H1 (cell line): ENCODE measurements at regions of chr17 and their contacts with region 1.

Region 1: GRCh38 chr17:68457539-68458259 is 403 bp upstream of the WIPI1 start:
- DNase-seq: peak; percentile 97 to 98
- H3K4me3 ChIP-seq: peak overlapping the region; percentile 40 to 71 (median 53)
- H3K27ac ChIP-seq: no peak overlapping the region
- H3K4me1 ChIP-seq: peaks cover 3 to 7% (median 5%) of the 10 kb centered on the region in 4 experiments; a peak in 6 of 7 replicates
- H3K27me3 ChIP-seq: no peaks in the 10 kb centered on the region
- CTCF ChIP-seq: no peak
- EP300 ChIP-seq: peak in 1 of 2 experiments; percentile 83; a peak in 1 of 3 replicates
- POLR2A ChIP-seq: peak in 1 of 2 experiments; percentile 64; a peak in 1 of 3 replicates
- RAD21 ChIP-seq: 0 out of 4 replicates have a peak, but pooled peaks of 1 of the 2 experiments have one; percentile 2

Region 2: GRCh38 chr17:68247445-68248198 is 210.1 kb before region 1 on chr17 and contains the start of gene AMZ2:
- CTCF ChIA-PET with region 1: interaction called, 3 read pairs
- POLR2A ChIA-PET with region 1: interaction called, 10 read pairs
- DNase-seq: peak; percentile 68 to 98
- H3K4me3 ChIP-seq: peak within 1 kb of the TSS; percentile 75 to 88 (median 78)
- H3K27ac ChIP-seq: peak within 1 kb of the TSS; percentile 77
- H3K4me1 ChIP-seq: no peaks in the 10 kb centered on the region; a peak in 2 of 7 replicates
- H3K27me3 ChIP-seq: no peaks in the 10 kb centered on the region
- CTCF ChIP-seq: no peak
- EP300 ChIP-seq: no peak
- POLR2A ChIP-seq: peak; percentile 76 to 82
- RAD21 ChIP-seq: no peak
- total RNA-seq, gene AMZ2: 66.4 and 71.0 TPM in 2 replicates

Region 3: DNA sequence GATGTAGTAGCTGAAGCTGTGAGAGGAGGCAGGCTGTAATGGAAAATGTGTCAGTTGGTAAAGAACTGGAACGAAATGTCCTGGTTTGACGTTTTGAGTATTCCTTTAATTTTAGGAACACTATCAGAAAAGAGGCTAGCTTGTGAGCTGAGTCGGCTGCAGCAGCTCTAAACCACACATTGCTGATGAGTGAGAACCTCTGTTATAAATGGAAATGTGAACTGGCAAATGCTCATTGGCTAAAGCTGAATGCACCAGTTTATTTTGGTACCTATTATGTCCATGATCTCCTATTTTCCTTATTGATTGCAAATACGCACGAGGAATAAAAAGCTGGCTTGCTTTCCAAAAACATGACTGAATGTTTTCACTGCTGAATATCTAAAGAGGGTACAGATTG is 10.6 kb after region 1 on chr17:
- CTCF ChIA-PET with region 1: interaction called, 14 read pairs
- POLR2A ChIA-PET with region 1: no interaction called
- DNase-seq: no peak
- H3K4me3 ChIP-seq: no peak overlapping the region
- H3K27ac ChIP-seq: no peak overlapping the region
- H3K4me1 ChIP-seq: peaks cover 0 to 3% (median 0%) of the 10 kb centered on the region in 4 experiments; a peak in 3 of 7 replicates
- H3K27me3 ChIP-seq: no peaks in the 10 kb centered on the region
- CTCF ChIP-seq: no peak
- EP300 ChIP-seq: no peak
- POLR2A ChIP-seq: no peak
- RAD21 ChIP-seq: no peak